Mammary epithelial cell (primary cell): ENCODE measurements at regions of chr11 and their contacts with region 1.

Region 1: DNA sequence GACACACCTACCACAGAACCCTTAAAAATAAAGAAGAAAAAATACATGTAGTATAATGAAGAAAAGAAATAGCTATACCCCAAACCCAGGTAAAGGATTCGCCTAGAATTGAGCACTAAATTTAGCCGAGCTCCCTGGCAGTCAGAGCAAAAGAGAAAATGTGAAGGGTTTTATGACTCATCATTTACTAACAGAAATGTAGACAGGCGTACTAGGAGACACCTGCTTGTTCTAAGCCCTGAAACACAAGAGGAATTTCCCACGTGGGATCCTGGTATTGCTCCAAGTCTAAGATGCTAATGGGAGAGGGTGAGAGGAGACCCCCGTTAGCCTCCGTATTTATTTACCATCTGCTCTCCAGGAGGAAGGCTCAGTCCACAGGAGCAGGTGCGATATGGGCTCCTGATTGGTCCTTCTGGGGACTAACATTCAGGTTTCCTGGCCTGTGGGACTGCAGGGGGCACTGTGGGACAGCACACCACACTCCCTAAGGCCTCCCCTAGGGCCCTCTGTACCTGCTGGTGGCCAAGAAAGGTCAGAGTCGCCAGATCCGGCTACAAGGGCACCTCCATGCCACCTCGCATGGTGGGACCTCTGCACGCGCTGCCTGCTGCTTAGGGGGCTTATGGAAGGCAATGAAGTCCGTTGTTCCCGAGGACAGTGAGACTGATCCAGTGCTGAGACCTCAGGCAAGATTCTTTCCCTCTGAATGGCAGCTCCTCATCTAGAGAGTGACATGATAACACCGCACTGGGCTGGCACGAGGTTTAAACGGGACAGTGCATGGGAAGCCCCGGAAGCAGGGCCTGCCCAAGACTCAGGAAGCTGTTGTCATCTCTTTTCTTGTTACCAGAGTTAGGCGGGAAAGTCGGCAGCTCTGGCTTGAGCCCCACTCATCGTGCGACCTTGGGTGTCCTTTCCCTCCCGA is 25.8 kb downstream of the KCNC1 start:
- DNase-seq: peak; percentile 26
- H3K4me3 ChIP-seq: no peak overlapping the region
- H3K27ac ChIP-seq: no peak overlapping the region
- H3K4me1 ChIP-seq: no peaks in the 10 kb centered on the region
- H3K27me3 ChIP-seq: no peaks in the 10 kb centered on the region
- CTCF ChIP-seq: peak; percentile 53 to 64

Region 2: DNA sequence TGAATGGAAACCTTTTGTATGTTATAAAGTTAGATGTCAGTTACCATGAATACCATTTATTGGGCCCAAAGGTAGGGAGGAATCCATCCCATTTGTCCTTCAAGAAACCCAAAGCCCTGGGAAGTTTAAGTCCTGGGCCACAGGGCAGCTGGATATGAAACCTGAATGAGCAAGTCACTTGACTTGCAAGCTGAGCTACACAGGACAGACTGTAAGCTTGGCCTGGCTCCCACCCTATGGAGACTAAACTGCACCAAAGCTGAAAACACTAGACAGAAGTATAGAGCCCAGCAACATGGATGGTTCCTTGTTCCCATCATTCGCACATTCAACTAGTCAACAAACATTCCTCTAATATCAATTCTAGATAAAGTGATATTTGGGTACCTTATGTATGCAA is 45.5 kb after region 1 on chr11:
- CTCF ChIA-PET with region 1: no interaction called
- dilution Hi-C with region 1: no loop called
- in situ Hi-C with region 1: no loop called
- intact Hi-C with region 1: loop called (anchors 1 kb)
- DNase-seq: no peak
- H3K4me3 ChIP-seq: no peak overlapping the region
- H3K27ac ChIP-seq: no peak overlapping the region
- H3K4me1 ChIP-seq: peaks cover 5% of the 10 kb centered on the region
- H3K27me3 ChIP-seq: no peaks in the 10 kb centered on the region
- CTCF ChIP-seq: no peak

Region 3: DNA sequence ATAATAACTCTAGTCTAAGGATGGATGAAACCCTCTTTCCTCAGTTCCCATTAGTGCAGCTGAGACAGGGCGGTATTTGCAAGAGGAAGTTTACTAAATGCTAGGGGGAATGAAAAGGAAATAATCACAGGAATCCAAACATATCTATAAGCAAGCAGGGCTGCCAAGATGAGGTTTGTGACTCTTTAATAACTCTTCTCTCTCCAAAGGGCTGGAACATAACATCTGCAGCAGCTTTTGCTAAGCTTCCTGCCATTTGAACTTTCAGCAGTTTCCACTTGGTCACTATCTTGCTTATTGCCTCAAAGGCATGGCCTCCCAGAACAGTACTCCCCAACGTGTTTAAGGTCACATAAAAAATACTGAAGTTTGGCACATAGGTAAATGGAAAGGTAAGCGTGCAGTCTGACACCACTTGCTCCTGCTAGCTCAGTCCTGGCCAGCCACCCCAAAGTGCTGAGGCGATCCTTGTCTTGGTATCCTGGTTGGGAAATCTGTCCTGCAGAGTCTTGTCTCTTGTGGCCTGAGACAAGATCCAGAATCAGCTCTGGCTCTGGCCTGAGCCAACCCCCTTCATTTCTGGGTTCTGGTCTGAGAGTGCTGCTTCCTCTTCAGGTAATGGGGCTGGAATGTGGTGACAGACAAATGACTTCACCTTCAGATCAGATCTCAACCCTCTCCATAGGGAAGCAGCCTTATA is 56.0 kb after region 1 on chr11:
- CTCF ChIA-PET with region 1: no interaction called
- dilution Hi-C with region 1: no loop called
- in situ Hi-C with region 1: no loop called
- intact Hi-C with region 1: no loop called
- DNase-seq: peak; percentile 11
- H3K4me3 ChIP-seq: no peak overlapping the region
- H3K27ac ChIP-seq: no peak overlapping the region
- H3K4me1 ChIP-seq: peaks cover 20% of the 10 kb centered on the region
- H3K27me3 ChIP-seq: no peaks in the 10 kb centered on the region
- CTCF ChIP-seq: no peak